ENCODE measurements at regions of chr7 and their contacts with region 1.

Region 1: DNA sequence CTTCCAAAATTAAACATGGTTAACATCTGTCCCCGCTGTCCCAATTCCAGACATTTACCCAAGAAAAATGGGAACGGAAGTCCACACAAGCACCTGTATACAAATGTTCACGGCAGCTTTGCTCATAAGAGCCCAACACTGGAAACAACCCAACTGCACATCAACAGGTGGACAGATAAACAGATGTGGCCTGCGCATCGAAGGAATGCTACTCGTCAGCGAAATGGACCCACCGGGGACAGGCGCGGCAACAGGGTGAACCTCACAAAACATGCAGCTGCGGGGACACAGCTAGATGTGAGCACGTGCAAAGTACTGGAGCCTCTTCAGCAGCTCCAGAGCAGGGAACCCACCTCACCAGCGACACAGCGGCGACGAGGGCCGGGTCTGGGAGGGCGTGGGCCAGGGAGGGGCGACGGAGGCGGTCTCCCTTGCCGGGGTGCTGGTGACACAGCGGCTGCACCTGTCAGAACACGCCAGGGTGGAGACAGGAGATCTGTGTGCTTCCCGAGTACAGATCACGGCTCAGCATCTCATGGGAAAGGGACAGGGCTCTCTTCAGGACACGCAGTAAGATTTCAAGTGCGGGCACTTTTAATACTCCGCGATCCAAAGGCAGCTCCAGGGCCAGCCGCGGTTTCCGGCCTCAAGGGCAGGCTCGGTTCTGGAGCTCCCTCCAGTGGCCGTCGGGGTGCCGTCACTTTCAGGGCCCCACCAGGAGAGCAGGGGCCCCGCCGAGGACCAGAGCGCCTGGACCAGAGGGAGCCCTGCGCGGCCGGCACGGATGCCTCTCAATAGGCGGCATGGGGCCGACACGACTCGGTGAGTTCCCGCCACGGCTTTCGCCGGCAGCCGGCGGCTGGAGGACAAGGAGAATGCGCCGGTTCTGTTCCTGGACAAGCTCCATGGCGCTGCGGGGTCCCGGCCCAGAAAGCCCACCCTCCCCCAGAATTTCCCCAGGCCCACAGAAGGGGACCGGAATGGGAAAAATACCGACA is 21.2 kb downstream of the GPR146 start:
- DNase-seq: peak; percentile 88
- ATAC-seq: peak; percentile 68
- H3K4me3 ChIP-seq: peak overlapping the region in 3 of 5 experiments; percentile 12 to 47 (median 31)
- H3K4me3 Mint-ChIP-seq: peak overlapping the region; percentile 80
- H3K27ac ChIP-seq: no peak overlapping the region
- H3K27ac Mint-ChIP-seq: peak overlapping the region; percentile 57
- H3K4me1 ChIP-seq: peaks cover 30 to 42% of the 10 kb centered on the region in 2 donors
- H3K4me1 Mint-ChIP-seq: peaks cover 44% of the 10 kb centered on the region
- H3K27me3 ChIP-seq: peaks cover 0 to 33% (median 14%) of the 10 kb centered on the region in 4 experiments
- H3K27me3 Mint-ChIP-seq: peaks cover 18% of the 10 kb centered on the region
- CTCF ChIP-seq: peak; percentile 90

Region 2: DNA sequence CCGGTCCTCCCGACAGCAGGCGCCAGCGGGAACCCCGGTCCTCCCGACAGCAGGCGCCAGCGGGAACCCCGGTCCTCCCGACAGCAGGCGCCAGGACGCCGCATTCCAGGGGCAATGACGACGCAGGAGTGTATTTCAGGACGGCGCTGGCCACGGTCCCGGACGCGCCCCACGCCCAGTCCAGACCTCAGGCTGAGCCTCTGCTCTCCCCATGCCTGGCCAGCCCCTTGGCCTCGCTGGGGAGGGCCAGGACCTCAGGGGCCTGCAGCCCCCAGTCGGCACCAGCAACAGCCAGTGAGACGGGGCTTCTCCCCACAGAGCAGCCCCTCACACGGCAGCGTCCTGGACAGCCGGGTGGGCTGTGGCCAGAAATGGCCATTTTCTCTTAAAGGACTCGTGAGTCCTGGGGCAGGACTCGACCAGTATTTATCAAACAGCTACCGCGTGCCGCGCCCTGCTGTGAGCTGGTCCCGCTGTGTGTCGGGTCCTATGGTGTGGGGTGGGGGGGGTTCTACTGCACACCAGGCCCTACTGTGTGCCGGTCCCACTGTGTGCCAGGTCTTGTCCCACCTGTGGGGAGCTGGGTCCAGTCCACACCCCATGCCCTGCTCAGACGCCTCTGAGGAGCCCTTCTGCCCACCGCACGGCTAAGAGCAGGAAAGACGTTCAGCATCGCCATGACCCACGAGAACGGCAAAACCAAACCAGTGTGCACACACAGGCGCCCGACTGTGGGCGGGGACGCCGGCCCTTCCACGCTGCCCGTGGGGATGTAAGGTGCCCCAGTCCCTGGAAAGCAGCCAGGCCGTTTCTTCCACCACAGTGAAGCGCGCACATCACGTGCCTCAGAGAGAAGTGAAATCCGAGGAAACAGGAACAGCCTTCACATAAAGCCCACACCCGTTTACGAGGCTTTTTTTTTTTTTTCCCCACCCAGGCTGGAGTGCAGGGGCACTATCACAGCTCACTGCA is 155.9 kb before region 1 on chr7:
- CTCF ChIA-PET with region 1: interaction called, 25 read pairs
- POLR2A ChIA-PET with region 1: no interaction called
- intact Hi-C with region 1: loop called (anchors 10 kb)
- DNase-seq: peak; percentile 85
- ATAC-seq: peak; percentile 40
- H3K4me3 ChIP-seq: peak overlapping the region in 4 of 5 experiments; percentile 29 to 61 (median 51)
- H3K4me3 Mint-ChIP-seq: peak overlapping the region; percentile 85
- H3K27ac ChIP-seq: peak overlapping the region; percentile 1 to 33
- H3K27ac Mint-ChIP-seq: peak overlapping the region; percentile 68
- H3K4me1 ChIP-seq: peaks cover 16 to 20% of the 10 kb centered on the region in 2 donors
- H3K4me1 Mint-ChIP-seq: peaks cover 18% of the 10 kb centered on the region
- H3K27me3 ChIP-seq: no peaks in the 10 kb centered on the region
- H3K27me3 Mint-ChIP-seq: no peaks in the 10 kb centered on the region
- CTCF ChIP-seq: no peak

Region 3: GRCh38 chr7:1020849-1021251 is 44.7 kb before region 1 on chr7:
- CTCF ChIA-PET with region 1: interaction called, 57 read pairs
- POLR2A ChIA-PET with region 1: interaction called, 10 read pairs
- intact Hi-C with region 1: loop called (anchors 1 kb)
- DNase-seq: peak; percentile 49
- ATAC-seq: no peak
- H3K4me3 ChIP-seq: no peak overlapping the region
- H3K4me3 Mint-ChIP-seq: no peak overlapping the region
- H3K27ac ChIP-seq: no peak overlapping the region
- H3K27ac Mint-ChIP-seq: no peak overlapping the region
- H3K4me1 ChIP-seq: peaks cover 50 to 62% of the 10 kb centered on the region in 2 donors
- H3K4me1 Mint-ChIP-seq: peaks cover 67% of the 10 kb centered on the region
- H3K27me3 ChIP-seq: peaks cover 0 to 2% (median 0%) of the 10 kb centered on the region in 4 experiments
- H3K27me3 Mint-ChIP-seq: no peaks in the 10 kb centered on the region
- CTCF ChIP-seq: peak; percentile 48

Region 4: GRCh38 chr7:1044191-1045068 is 21.1 kb before region 1 on chr7 and contains the start of gene GPR146:
- CTCF ChIA-PET with region 1: interaction called, 24 read pairs
- POLR2A ChIA-PET with region 1: interaction called, 3 read pairs
- intact Hi-C with region 1: loop called (anchors 1 kb)
- DNase-seq: peak; percentile 91
- ATAC-seq: peak; percentile 95
- H3K4me3 ChIP-seq: peak within 1 kb of the TSS; percentile 11 to 75 (median 63)
- H3K4me3 Mint-ChIP-seq: peak within 1 kb of the TSS; percentile 96
- H3K27ac ChIP-seq: peak within 1 kb of the TSS in 1 of 2 donors; percentile 69
- H3K27ac Mint-ChIP-seq: peak within 1 kb of the TSS; percentile 75
- H3K4me1 ChIP-seq: peaks cover 17 to 20% of the 10 kb centered on the region in 2 donors
- H3K4me1 Mint-ChIP-seq: peaks cover 28% of the 10 kb centered on the region
- H3K27me3 ChIP-seq: peaks cover 0 to 5% (median 1%) of the 10 kb centered on the region in 4 experiments
- H3K27me3 Mint-ChIP-seq: peaks cover 3% of the 10 kb centered on the region
- CTCF ChIP-seq: peak; percentile 80
- total RNA-seq, gene GPR146: 44.6 and 45.4 TPM in 2 replicates

Region 5: GRCh38 chr7:1144269-1144771 is 78.8 kb after region 1 on chr7:
- CTCF ChIA-PET with region 1: interaction called, 41 read pairs
- POLR2A ChIA-PET with region 1: interaction called, 3 read pairs
- intact Hi-C with region 1: loop called (anchors 5 kb)
- DNase-seq: peak; percentile 65
- ATAC-seq: peak; percentile 42
- H3K4me3 ChIP-seq: no peak overlapping the region
- H3K4me3 Mint-ChIP-seq: peak overlapping the region; percentile 75
- H3K27ac ChIP-seq: no peak overlapping the region
- H3K27ac Mint-ChIP-seq: peak overlapping the region; percentile 85
- H3K4me1 ChIP-seq: peaks cover 15 to 33% of the 10 kb centered on the region in 2 donors
- H3K4me1 Mint-ChIP-seq: peaks cover 32% of the 10 kb centered on the region
- H3K27me3 ChIP-seq: no peaks in the 10 kb centered on the region
- H3K27me3 Mint-ChIP-seq: no peaks in the 10 kb centered on the region
- CTCF ChIP-seq: peak; percentile 27

Region 6: DNA sequence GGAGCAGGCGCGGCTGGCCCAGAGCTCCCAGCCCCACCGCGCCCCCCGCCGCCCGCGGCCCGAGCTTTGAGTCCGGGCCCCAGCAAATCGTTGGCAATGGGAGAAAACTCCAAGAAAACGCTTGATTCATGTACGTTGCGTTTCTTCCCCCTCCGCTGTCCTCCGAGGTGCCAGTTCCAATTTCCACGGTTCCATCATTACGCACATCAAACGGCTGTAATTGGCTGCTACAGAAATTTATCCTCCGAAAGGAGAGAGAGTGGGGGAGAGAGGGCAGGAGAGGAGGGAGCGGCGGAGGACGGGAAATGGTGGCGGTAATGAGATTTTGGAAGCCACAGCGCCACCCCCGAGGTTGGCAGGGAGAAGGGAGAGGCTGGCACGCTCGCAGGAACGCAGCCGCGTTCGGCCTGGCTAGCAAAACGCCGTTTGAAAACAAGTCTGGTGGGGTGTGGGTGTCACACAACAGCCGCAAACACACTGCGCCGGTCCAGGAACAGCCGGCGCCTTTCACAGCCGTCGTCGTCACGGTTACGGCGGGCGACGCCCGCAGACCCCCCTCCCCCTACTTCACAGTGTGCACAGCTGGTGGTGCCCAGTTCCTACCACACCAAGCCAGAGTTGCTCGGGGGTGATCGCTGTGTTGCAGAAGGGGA is 224.6 kb after region 1 on chr7:
- CTCF ChIA-PET with region 1: no interaction called
- POLR2A ChIA-PET with region 1: no interaction called
- intact Hi-C with region 1: no loop called
- DNase-seq: no peak
- ATAC-seq: no peak
- H3K4me3 ChIP-seq: peak overlapping the region in 4 of 5 experiments; percentile 11 to 41 (median 28)
- H3K4me3 Mint-ChIP-seq: peak overlapping the region; percentile 68
- H3K27ac ChIP-seq: no peak overlapping the region
- H3K27ac Mint-ChIP-seq: no peak overlapping the region
- H3K4me1 ChIP-seq: peaks cover 6 to 11% of the 10 kb centered on the region in 2 donors
- H3K4me1 Mint-ChIP-seq: peaks cover 10% of the 10 kb centered on the region
- H3K27me3 ChIP-seq: peaks cover 0 to 26% (median 6%) of the 10 kb centered on the region in 4 experiments
- H3K27me3 Mint-ChIP-seq: peaks cover 19% of the 10 kb centered on the region
- CTCF ChIP-seq: no peak